ENCODE measurements at regions of chr9 and their contacts with region 1.

Region 1: DNA sequence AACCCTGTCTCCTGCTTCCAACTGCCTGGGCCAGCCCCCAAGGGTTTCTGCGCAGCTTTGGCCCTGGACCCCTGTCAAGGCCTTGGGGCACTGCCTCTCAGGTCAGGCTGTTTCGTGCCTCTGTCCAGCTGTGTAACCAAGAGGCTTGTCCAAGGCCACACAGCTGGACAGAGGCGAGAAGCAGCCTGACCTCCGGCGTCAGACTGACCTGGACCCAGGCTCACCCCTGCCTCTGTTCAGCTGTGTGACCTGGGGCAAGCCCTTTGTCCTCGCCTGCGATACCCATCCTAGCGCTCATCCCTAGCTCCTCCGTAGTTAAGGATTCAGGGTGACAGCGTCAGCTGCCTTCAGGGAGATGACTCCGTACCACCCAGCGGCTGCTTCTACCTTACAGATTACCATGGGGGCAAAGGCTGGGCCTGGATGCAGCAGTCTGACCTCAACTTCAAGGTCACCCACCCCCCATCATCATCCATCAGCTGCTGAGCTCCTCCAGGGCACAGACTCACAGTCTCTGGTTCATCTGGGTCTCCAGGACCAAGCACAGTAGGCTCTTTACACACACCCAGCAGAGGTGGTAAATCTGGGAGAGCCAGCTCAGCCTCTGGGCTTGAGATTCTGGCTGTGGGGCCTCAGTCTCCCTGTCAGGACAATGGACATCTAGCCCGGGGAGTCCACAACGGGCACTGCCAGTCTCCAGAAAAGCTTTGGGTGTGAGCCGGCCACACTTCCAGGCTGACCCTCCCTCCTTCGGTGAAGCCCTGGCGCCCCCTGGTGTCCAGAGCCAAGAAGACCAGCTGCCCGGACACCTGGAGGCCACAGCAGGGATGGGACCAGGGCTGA is 7.9 kb downstream of the AK1 start:
- DNase-seq: peak; percentile 44 to 91 (median 62)
- ATAC-seq: peak; percentile 85
- H3K4me3 ChIP-seq: no peak overlapping the region
- H3K4me3 Mint-ChIP-seq: no peak overlapping the region
- H3K27ac ChIP-seq: no peak overlapping the region
- H3K27ac Mint-ChIP-seq: peak overlapping the region in 1 of 9 donors; percentile 32
- H3K4me1 ChIP-seq: peaks cover 12 to 13% of the 10 kb centered on the region in 2 donors
- H3K4me1 Mint-ChIP-seq: peaks cover 12 to 19% (median 16%) of the 10 kb centered on the region in 7 donors
- H3K27me3 ChIP-seq: no peaks in the 10 kb centered on the region
- H3K27me3 Mint-ChIP-seq: no peaks in the 10 kb centered on the region

Region 2: GRCh38 chr9:127910613-127911205 is 41.2 kb after region 1 on chr9:
- CTCF ChIA-PET with region 1: interaction called, 10 read pairs
- POLR2A ChIA-PET with region 1: interaction called, 9 read pairs
- intact Hi-C with region 1: loop called in 1 of 2 experiments (anchors 5 kb)
- DNase-seq: peak in 1 of 9 donors; percentile 3
- ATAC-seq: no peak
- H3K4me3 ChIP-seq: no peak overlapping the region
- H3K4me3 Mint-ChIP-seq: peak overlapping the region in 2 of 10 donors; percentile 37 to 77
- H3K27ac ChIP-seq: no peak overlapping the region
- H3K27ac Mint-ChIP-seq: peak overlapping the region; percentile 69 to 95 (median 83)
- H3K4me1 ChIP-seq: peaks cover 26 to 33% of the 10 kb centered on the region in 2 donors
- H3K4me1 Mint-ChIP-seq: peaks cover 23 to 50% (median 40%) of the 10 kb centered on the region in 7 donors
- H3K27me3 ChIP-seq: no peaks in the 10 kb centered on the region
- H3K27me3 Mint-ChIP-seq: no peaks in the 10 kb centered on the region

Measured in naive thymus-derived CD4-positive, alpha-beta T cell (primary cell).